CD4-positive, alpha-beta memory T cell (primary cell): ENCODE measurements at regions of chr1 and their contacts with region 1.

Region 1: GRCh38 chr1:233790662-233791375 is 113.7 kb upstream of the SLC35F3 start:
- DNase-seq: peak in 4 of 5 donors; percentile 28 to 44 (median 34)
- H3K4me3 ChIP-seq: no peak overlapping the region
- H3K4me3 Mint-ChIP-seq: no peak overlapping the region
- H3K27ac ChIP-seq: no peak overlapping the region
- H3K27ac Mint-ChIP-seq: no peak overlapping the region
- H3K4me1 ChIP-seq: no peaks in the 10 kb centered on the region
- H3K4me1 Mint-ChIP-seq: no peaks in the 10 kb centered on the region
- H3K27me3 ChIP-seq: no peaks in the 10 kb centered on the region
- H3K27me3 Mint-ChIP-seq: peaks cover 9 to 18% of the 10 kb centered on the region in 2 donors

Region 2: GRCh38 chr1:233394860-233395717 is 395.7 kb before region 1 on chr1:
- CTCF ChIA-PET with region 1: no interaction called
- POLR2A ChIA-PET with region 1: no interaction called
- intact Hi-C with region 1: loop called (anchors 1 kb)
- DNase-seq: peak; percentile 15 to 49 (median 26)
- H3K4me3 ChIP-seq: no peak overlapping the region
- H3K4me3 Mint-ChIP-seq: no peak overlapping the region
- H3K27ac ChIP-seq: no peak overlapping the region
- H3K27ac Mint-ChIP-seq: no peak overlapping the region
- H3K4me1 ChIP-seq: no peaks in the 10 kb centered on the region
- H3K4me1 Mint-ChIP-seq: no peaks in the 10 kb centered on the region
- H3K27me3 ChIP-seq: no peaks in the 10 kb centered on the region
- H3K27me3 Mint-ChIP-seq: peaks cover 24 to 26% of the 10 kb centered on the region in 2 donors

Region 3: GRCh38 chr1:233689017-233689747 is 101.6 kb before region 1 on chr1:
- CTCF ChIA-PET with region 1: no interaction called
- POLR2A ChIA-PET with region 1: no interaction called
- intact Hi-C with region 1: no loop called
- DNase-seq: no peak
- H3K4me3 ChIP-seq: no peak overlapping the region
- H3K4me3 Mint-ChIP-seq: no peak overlapping the region
- H3K27ac ChIP-seq: no peak overlapping the region
- H3K27ac Mint-ChIP-seq: no peak overlapping the region
- H3K4me1 ChIP-seq: no peaks in the 10 kb centered on the region
- H3K4me1 Mint-ChIP-seq: no peaks in the 10 kb centered on the region
- H3K27me3 ChIP-seq: no peaks in the 10 kb centered on the region
- H3K27me3 Mint-ChIP-seq: peaks cover 8 to 10% of the 10 kb centered on the region in 2 donors